ENCODE measurements at regions of chr5 and their contacts with region 1.

Region 1: DNA sequence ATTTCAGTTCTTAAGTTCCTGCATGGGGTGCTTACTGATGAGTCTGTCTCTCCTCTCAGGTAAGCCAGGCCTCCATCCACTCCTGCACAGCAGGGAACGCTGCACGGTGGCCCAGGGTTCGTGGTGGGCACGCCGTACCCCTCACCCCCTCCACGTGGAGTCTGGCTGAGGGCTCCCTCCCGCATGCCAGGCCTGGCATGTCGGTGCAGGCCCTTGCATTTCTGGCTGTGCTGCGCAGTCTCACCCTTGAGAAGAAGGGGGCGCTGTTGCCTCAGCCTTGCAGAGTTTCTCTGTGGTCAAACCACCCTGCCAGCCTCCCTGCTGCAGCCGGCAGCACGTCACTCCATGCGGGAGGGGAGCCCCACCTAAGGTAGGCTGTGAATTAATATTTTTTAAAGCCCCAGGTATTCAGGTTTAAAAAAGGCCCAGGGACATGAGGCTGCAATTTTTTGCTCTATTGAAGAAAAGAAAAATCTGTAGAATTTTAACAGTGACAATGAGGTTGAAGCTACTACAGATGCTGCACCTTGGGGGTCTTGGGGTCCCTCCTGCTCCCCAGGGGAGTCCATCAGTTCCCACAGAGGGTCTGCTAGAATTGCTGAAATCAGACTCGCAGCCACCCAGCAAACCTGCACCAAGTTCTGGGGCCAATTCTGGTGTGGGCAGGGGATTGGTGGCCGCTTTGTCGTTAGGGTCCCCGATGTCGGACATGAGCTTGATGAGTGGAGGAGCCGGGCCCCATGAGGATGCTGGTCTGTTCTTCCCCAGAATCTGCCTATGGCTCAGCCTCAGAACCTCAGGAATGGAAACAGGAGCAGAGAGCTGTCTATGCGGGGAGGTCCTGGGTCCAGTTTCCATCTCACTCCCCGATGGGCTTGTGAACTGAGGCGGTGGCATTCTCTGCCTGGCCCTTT is 52.6 kb downstream of the TENT4A start:
- DNase-seq: peak; percentile 80 to 86 (median 83)
- H3K4me3 ChIP-seq: peak overlapping the region in 2 of 3 experiments; percentile 2 to 68
- H3K4me3 Mint-ChIP-seq: peak overlapping the region; percentile 60 to 78
- H3K27ac ChIP-seq: peak overlapping the region; percentile 86 to 94
- H3K27ac Mint-ChIP-seq: peak overlapping the region; percentile 75 to 97 (median 94)
- H3K4me1 ChIP-seq: peaks cover 26 to 39% of the 10 kb centered on the region in 2 donors
- H3K4me1 Mint-ChIP-seq: peaks cover 32% of the 10 kb centered on the region
- H3K27me3 ChIP-seq: no peaks in the 10 kb centered on the region
- H3K27me3 Mint-ChIP-seq: peaks cover 0 to 3% (median 3%) of the 10 kb centered on the region in 3 donors
- CTCF ChIP-seq: peak; percentile 93

Region 2: DNA sequence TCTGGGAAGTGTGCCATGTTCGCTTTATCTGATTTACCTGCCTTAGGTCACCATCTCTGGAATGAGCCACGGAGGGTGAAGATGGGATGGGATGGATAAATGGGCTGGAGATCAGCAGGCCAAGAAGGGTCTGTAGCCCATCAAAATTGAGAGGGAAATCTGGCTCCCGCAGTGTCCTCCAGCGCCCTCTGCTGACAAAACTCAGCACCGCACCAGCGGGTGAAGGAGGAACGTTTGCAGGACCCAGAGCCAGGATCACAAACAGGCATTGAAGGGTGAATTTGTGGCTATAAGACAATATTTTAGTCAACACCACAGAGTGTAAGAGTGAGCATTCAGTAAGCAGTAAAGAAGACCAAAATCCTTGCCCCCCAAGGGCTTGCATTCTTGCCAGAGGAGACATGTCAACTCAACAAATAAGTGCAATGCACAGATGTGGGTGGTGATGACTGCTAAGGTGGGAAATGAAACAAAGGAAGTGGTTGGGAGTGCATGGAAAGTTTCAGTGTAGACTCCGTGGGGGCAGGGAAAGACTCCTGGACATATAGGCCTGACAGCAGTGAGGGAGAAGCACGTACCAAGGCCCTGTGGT is 71.7 kb after region 1 on chr5:
- intact Hi-C with region 1: loop called (anchors 5 kb)
- DNase-seq: peak; percentile 4 to 29 (median 27)
- H3K4me3 ChIP-seq: no peak overlapping the region
- H3K4me3 Mint-ChIP-seq: no peak overlapping the region
- H3K27ac ChIP-seq: no peak overlapping the region
- H3K27ac Mint-ChIP-seq: no peak overlapping the region
- H3K4me1 ChIP-seq: no peaks in the 10 kb centered on the region
- H3K4me1 Mint-ChIP-seq: peaks cover 11% of the 10 kb centered on the region
- H3K27me3 ChIP-seq: no peaks in the 10 kb centered on the region
- H3K27me3 Mint-ChIP-seq: peaks cover 0 to 6% (median 4%) of the 10 kb centered on the region in 3 donors
- CTCF ChIP-seq: peak; percentile 86

Region 3: DNA sequence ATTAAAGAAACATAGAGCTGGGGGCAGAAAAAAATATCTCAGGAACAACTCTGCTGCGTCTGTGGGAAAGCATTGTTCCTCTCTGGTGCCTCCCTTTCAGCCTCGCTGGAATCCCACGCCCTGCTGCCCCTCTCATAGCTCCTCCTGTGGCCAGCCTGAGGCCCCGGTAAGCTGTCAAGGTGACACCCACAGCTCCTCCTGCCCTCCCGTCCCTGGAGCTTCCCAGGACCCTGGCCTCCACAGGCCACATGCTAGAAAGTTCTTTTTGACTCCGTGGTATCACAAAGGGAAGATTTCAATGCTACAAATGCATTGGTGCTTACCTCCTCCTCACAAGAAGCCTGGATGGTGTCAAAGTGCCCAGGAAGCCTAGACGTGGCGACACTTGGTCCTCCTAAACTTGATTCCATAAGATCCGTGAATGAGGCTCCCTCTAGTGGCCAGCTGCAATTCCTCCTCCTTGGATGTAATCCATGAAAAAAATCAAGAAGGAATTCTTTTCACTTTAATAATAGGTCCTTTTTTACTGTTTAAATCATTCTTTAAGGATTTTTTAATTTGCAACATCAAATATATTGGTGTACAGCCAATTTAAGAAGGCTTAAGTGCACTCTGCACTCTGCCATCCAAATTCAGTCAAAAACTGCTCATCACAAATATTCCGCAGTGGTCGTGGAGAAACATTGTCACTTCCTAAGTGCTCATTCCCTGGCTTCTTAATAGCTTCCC is 980.2 kb after region 1 on chr5:
- intact Hi-C with region 1: loop called in 1 of 2 experiments (anchors 10 kb)
- DNase-seq: peak; percentile 43 to 59 (median 53)
- H3K4me3 ChIP-seq: no peak overlapping the region
- H3K4me3 Mint-ChIP-seq: no peak overlapping the region
- H3K27ac ChIP-seq: no peak overlapping the region
- H3K27ac Mint-ChIP-seq: no peak overlapping the region
- H3K4me1 ChIP-seq: no peaks in the 10 kb centered on the region
- H3K4me1 Mint-ChIP-seq: no peaks in the 10 kb centered on the region
- H3K27me3 ChIP-seq: no peaks in the 10 kb centered on the region
- H3K27me3 Mint-ChIP-seq: peaks cover 1 to 5% (median 3%) of the 10 kb centered on the region in 3 donors
- CTCF ChIP-seq: peak; percentile 95

Region 4: GRCh38 chr5:7815892-7816534 is 1050.1 kb after region 1 on chr5:
- intact Hi-C with region 1: loop called in 1 of 2 experiments (anchors 10 kb)
- DNase-seq: peak; percentile 63 to 76 (median 71)
- H3K4me3 ChIP-seq: peak overlapping the region in 1 of 3 experiments; percentile 35
- H3K4me3 Mint-ChIP-seq: peak overlapping the region in 1 of 2 donors; percentile 62
- H3K27ac ChIP-seq: no peak overlapping the region
- H3K27ac Mint-ChIP-seq: peak overlapping the region in 4 of 7 donors; percentile 30 to 74 (median 40)
- H3K4me1 ChIP-seq: peaks cover 8 to 9% of the 10 kb centered on the region in 2 donors
- H3K4me1 Mint-ChIP-seq: peaks cover 14% of the 10 kb centered on the region
- H3K27me3 ChIP-seq: no peaks in the 10 kb centered on the region
- H3K27me3 Mint-ChIP-seq: peaks cover 0 to 3% (median 1%) of the 10 kb centered on the region in 3 donors
- CTCF ChIP-seq: peak; percentile 92